Activated CD8-positive, alpha-beta T cell treated with anti-CD3 and anti-CD28 coated beads, Interleukin-2, amount 10 ng/mL, durations not matched to agents 7 days and 5 days (primary cell): ENCODE measurements at regions of chr5 and their contacts with region 1.

Region 1: GRCh38 chr5:39177631-39177964 is 41.8 kb downstream of the FYB1 start:
- DNase-seq: no peak
- ATAC-seq: peak; percentile 48
- H3K4me3 Mint-ChIP-seq: peak overlapping the region; percentile 64
- H3K27ac Mint-ChIP-seq: peak overlapping the region; percentile 87
- H3K4me1 Mint-ChIP-seq: peaks cover 95% of the 10 kb centered on the region
- H3K27me3 Mint-ChIP-seq: no peaks in the 10 kb centered on the region

Region 2: DNA sequence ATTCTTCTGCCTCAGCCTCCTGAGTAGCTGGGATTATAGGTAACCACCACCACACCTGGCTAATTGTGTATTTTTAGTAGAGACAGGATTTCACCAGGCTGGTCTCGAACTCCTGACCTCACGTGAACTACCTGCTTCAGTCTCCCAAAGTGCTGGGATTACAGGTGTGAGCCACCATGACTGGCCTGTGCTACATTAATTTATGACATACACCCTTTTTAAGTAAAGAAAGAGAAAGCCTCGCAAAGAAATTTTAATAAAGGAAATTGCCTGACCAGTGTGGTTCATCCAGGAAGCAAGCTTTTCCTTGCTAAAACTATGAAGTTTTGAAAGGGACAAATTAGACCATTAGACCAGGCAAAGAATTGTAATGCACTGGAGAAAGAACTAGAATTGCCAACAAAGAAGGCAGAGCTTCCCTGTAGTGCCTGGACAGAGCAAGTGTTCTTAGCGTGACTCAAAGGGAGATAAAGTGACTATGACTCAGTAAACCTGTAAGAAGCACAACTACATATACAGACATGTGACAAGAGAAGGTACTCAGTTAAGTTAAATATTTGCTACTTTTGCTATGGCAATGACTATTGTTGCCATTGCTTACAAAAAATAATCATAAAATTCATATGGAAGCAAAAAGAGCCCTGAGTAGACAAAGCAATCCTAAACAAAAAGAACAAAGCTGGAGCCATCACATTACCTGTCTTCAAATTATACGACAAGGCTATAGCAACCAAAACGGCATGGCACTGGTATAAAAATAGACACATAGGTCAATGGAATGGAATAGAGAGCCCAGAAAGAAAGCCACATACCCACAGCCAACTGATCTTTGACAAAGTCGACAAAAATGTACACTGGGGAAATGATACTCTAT is 12.8 kb before region 1 on chr5:
- CTCF ChIA-PET with region 1: interaction called, 11 read pairs
- POLR2A ChIA-PET with region 1: interaction called, 22 read pairs
- DNase-seq: no peak
- ATAC-seq: peak; percentile 81
- H3K4me3 Mint-ChIP-seq: peak overlapping the region; percentile 69
- H3K27ac Mint-ChIP-seq: peak overlapping the region; percentile 84
- H3K4me1 Mint-ChIP-seq: peaks cover 86% of the 10 kb centered on the region
- H3K27me3 Mint-ChIP-seq: no peaks in the 10 kb centered on the region

Region 3: DNA sequence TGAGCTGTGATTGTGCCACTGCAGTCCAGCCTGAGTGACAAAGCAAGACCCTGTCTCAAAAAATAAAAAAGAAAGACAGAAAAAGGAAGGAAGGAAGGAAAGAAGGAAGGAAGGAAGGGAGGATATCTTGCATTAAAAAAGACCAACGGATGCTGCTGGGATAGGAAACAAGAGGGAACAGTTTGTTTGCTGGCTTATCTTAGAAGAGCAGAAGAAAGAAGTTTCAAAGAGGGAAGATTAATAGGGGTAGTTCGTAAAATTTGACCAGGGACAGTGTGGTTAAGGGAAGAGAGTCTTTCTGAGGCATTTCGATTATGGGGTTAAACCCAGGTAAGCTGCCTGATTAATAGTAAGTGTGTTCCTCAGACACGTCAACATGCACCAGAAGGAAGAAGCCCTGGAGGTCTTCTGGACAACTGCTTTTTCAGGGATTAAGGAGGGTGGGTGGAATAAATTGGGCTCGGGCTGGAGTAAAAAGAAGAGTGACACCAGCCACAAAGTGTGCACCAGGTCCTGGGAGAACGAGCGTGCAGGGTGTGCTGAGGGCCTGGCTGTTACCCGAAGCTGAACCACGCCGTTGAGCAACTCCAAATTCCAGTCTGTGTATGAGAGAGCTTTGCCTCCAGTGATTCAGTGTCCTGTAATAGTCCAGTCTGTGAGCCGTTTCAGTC is 17.0 kb after region 1 on chr5:
- CTCF ChIA-PET with region 1: interaction called, 178 read pairs
- POLR2A ChIA-PET with region 1: interaction called, 84 read pairs
- DNase-seq: peak; percentile 45
- ATAC-seq: peak; percentile 24
- H3K4me3 Mint-ChIP-seq: peak overlapping the region; percentile 79
- H3K27ac Mint-ChIP-seq: peak overlapping the region; percentile 87
- H3K4me1 Mint-ChIP-seq: peaks cover 75% of the 10 kb centered on the region
- H3K27me3 Mint-ChIP-seq: no peaks in the 10 kb centered on the region

Region 4: GRCh38 chr5:39202597-39203274 is 25.1 kb after region 1 on chr5:
- CTCF ChIA-PET with region 1: interaction called, 15 read pairs
- POLR2A ChIA-PET with region 1: interaction called, 21 read pairs
- DNase-seq: peak; percentile 69
- ATAC-seq: peak; percentile 57
- H3K4me3 Mint-ChIP-seq: peak overlapping the region; percentile 86
- H3K27ac Mint-ChIP-seq: peak overlapping the region; percentile 86
- H3K4me1 Mint-ChIP-seq: peaks cover 41% of the 10 kb centered on the region
- H3K27me3 Mint-ChIP-seq: no peaks in the 10 kb centered on the region

Region 5: DNA sequence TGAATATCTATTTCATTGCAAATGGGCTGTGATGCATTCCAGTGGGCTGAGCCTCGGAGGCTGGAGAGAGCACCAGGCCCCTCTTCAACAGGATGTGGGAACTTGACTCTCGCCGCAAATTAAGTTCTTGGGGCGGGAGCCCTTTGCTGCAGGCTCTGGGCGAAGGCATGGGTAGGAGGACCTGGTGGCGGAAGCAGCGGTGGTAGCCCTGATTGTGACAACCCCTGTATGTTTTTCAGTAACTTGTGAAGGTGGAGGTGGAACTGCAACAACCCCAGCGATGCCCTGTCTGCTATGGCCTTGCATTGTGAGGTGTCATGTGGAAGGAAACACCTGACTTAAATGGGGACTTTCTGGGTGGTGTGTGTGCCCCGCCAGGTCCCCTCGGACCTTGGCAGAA is 32.3 kb after region 1 on chr5:
- CTCF ChIA-PET with region 1: interaction called, 14 read pairs
- POLR2A ChIA-PET with region 1: interaction called, 9 read pairs
- DNase-seq: peak; percentile 92
- ATAC-seq: peak; percentile 77
- H3K4me3 Mint-ChIP-seq: peak overlapping the region; percentile 66
- H3K27ac Mint-ChIP-seq: peak overlapping the region; percentile 93
- H3K4me1 Mint-ChIP-seq: peaks cover 93% of the 10 kb centered on the region
- H3K27me3 Mint-ChIP-seq: no peaks in the 10 kb centered on the region

Region 6: DNA sequence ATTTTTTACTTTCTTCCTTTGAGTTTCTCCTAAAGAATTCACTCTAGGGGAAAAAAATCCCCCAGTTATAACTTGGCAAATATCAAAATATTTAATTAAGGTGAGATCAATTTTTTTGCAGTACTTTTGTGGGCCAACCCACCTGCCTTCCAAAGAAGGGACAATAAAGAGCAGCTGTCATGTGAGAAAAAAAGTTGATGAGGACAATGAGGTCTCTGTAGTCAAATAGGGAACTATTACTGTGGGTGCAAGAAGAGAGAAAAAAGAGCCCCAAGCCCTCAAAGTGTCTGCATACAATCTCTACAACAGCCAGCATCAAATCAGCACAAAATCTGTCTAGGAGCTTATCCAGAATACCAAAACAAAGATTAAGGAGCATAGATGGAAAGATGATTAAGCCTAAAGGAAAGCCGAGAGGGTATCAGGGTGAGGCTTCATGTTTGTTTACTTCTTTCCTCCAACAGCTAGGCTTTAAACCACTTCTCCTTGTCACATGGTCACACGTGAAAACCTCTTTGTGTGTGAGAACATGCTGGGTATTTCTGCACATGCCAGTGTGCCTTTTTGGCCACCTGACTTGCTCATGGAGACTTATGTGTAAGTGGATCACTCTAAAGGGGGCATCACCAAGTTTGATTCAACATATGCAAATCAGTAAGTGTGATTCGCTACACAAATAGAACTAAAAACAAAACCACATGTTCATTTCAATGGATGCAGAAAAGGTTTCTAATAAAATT is 60.9 kb after region 1 on chr5:
- CTCF ChIA-PET with region 1: no interaction called
- POLR2A ChIA-PET with region 1: no interaction called
- DNase-seq: no peak
- ATAC-seq: no peak
- H3K4me3 Mint-ChIP-seq: no peak overlapping the region
- H3K27ac Mint-ChIP-seq: no peak overlapping the region
- H3K4me1 Mint-ChIP-seq: peaks cover 8% of the 10 kb centered on the region
- H3K27me3 Mint-ChIP-seq: no peaks in the 10 kb centered on the region